PC-9 (cell line): ENCODE measurements at regions of chr17 and their contacts with region 1.

Region 1: DNA sequence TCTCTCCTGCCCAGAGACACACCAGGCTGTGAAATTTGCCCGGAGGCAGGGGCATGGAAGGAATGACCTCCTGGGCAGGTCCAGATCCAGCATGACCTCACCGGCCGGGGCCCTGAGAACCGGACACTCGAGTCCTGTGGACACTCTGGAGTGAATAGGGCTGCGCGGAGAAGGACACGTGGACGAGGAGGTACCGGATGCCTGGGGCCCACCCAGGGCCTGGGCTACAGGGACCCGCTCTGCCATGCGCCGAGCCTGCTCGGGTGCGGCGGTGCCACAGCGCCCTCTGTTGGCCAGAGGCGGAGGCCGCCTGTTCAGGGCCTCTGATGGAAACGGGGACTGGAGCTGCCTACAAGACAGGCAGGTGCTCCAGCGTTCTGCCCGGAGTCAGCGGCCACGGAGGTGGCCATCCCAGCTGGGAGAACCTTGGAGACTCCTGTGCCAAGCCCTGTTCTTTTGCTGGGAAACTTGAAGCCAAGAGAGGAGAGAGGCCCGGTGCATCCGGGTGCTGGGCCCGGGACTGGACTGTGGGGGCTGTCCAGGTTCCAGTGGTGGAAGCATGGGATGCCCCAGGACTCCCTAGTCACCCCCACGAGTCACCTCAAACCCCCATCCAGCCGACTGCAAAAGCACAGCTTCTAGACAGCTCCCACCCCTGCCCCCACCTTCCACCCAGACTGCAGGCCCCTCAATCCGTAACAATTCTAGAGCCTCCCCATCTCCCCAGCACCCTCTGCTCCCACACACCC is 19.3 kb upstream of the NXPH3 start:
- DNase-seq: peak in 1 of 2 experiments; percentile 83
- H3K4me3 ChIP-seq: peak overlapping the region; percentile 27; the same call in 1 of the 2 replicates
- H3K27ac ChIP-seq: no peak overlapping the region
- H3K4me1 ChIP-seq: no peaks in the 10 kb centered on the region
- H3K27me3 ChIP-seq: no peaks in the 10 kb centered on the region
- CTCF ChIP-seq: peak; percentile 98

Region 2: GRCh38 chr17:48690655-48691054 is 865.7 kb before region 1 on chr17:
- CTCF ChIA-PET with region 1: interaction called, 14 read pairs
- POLR2A ChIA-PET with region 1: no interaction called
- intact Hi-C with region 1: no loop called
- DNase-seq: no peak
- H3K4me3 ChIP-seq: no peak overlapping the region
- H3K27ac ChIP-seq: no peak overlapping the region
- H3K4me1 ChIP-seq: no peaks in the 10 kb centered on the region
- H3K27me3 ChIP-seq: peaks cover 13% of the 10 kb centered on the region; the same call in 1 of the 2 replicates
- CTCF ChIP-seq: no peak

Region 3: GRCh38 chr17:49315551-49316257 is 240.7 kb before region 1 on chr17:
- CTCF ChIA-PET with region 1: interaction called, 5 read pairs
- POLR2A ChIA-PET with region 1: no interaction called
- intact Hi-C with region 1: loop called (anchors 1 kb)
- DNase-seq: peak; percentile 72 to 88
- H3K4me3 ChIP-seq: no peak overlapping the region
- H3K27ac ChIP-seq: peak overlapping the region; percentile 14; the same call in 1 of the 2 replicates
- H3K4me1 ChIP-seq: peaks cover 8% of the 10 kb centered on the region
- H3K27me3 ChIP-seq: no peaks in the 10 kb centered on the region
- CTCF ChIP-seq: peak; percentile 94

Region 4: GRCh38 chr17:49407981-49408501 is 148.4 kb before region 1 on chr17:
- CTCF ChIA-PET with region 1: interaction called, 12 read pairs
- POLR2A ChIA-PET with region 1: interaction called, 5 read pairs
- intact Hi-C with region 1: loop called (anchors 1 kb)
- DNase-seq: peak; percentile 58 to 69
- H3K4me3 ChIP-seq: no peak overlapping the region
- H3K27ac ChIP-seq: no peak overlapping the region
- H3K4me1 ChIP-seq: 0 out of 2 replicates have a peak, but pooled peaks cover under 1% of the 10 kb centered on the region
- H3K27me3 ChIP-seq: no peaks in the 10 kb centered on the region
- CTCF ChIP-seq: peak; percentile 94

Region 5: GRCh38 chr17:49414622-49415350 is 141.6 kb before region 1 on chr17 and contains the start of gene PHB1:
- CTCF ChIA-PET with region 1: interaction called, 12 read pairs
- POLR2A ChIA-PET with region 1: no interaction called
- intact Hi-C with region 1: no loop called
- DNase-seq: peak; percentile 94 to 98
- H3K4me3 ChIP-seq: peak within 1 kb of the TSS; percentile 72
- H3K27ac ChIP-seq: no peak within 1 kb of the TSS
- H3K4me1 ChIP-seq: peaks cover 14% of the 10 kb centered on the region
- H3K27me3 ChIP-seq: no peaks in the 10 kb centered on the region
- CTCF ChIP-seq: no peak
- total RNA-seq, gene PHB1: 197 and 244 TPM in 2 replicates

Region 6: DNA sequence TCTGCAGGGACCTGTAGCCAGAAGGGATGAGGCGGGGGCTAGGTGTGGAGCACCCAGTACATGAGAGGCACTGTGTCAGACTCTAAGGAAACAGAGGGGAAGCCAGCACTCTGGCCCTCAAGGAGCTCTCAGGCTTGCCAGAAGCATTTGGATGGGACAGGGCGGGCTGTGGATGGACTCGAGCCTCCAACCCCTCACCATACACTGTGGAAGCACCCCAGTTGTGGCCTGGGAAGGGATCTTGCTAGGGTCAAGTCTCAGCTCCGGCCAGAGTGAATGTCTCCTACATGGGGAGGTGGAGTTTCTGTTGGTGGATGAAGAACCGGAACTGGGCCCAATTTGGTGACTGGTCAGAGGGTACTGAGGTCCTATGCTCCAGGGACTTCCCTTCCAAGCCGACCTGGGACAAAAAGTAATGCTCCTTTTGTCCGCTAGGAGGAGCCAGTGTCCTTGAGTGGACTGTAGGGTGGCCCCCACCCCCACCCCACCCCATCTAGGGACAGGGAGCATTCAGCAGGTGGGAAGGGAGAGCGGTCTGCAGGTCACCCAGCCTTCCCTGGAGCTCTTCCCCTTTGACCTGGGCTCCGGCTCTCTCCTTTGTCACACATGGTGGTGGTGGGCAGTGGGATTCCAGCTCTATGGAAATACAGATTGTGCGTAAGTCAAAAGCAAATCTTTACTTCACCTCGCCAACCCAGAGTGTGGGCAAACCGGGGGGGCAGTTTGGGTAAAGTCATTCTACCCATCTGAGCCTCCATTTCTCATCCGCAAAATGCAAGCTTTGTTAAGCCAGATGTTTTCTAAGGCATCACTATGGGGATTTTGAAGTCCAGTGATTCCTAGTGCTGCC is 121.4 kb before region 1 on chr17:
- CTCF ChIA-PET with region 1: interaction called, 7 read pairs
- POLR2A ChIA-PET with region 1: no interaction called
- intact Hi-C with region 1: loop called (anchors 1 kb)
- DNase-seq: peak; percentile 46 to 62
- H3K4me3 ChIP-seq: no peak overlapping the region
- H3K27ac ChIP-seq: no peak overlapping the region
- H3K4me1 ChIP-seq: no peaks in the 10 kb centered on the region
- H3K27me3 ChIP-seq: peaks cover 74% of the 10 kb centered on the region
- CTCF ChIP-seq: peak; percentile 94

Region 7: DNA sequence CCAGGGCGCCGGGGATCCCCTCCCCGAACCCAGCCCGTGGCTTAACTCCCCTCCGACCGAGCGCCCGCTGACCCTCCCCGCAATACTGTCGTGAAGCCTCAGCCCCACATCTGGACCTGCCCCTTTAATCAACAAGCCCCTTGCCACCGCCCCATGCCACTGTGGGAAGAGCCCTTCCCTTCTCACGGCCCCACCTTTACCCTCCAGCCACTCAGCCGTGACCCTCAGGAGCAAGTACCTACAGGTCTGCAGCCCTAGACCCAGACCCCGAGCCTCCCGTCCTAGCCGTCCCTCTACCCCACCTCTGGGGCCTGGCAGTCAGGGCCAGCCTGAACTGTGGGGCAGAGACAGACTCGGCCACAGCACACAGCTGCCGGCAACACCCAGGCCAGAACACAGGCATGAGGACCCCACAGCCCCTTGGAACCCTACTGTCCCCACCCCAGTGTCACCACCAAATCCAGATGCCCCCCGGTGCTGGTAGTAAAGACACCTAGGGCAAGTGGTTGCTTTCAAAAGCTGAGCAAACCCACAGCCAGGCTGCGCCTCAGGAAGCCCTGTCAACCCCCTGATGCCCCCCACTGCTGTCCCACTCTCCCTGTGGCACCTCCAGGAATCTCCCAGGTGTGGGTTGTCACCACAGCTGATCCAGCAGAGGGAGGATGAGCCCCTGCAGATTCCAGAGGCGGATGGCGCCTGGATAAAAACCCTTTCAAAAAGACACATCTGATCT is 20.7 kb after region 1 on chr17:
- CTCF ChIA-PET with region 1: no interaction called
- POLR2A ChIA-PET with region 1: no interaction called
- intact Hi-C with region 1: no loop called
- DNase-seq: no peak
- H3K4me3 ChIP-seq: peak overlapping the region; percentile 51
- H3K27ac ChIP-seq: no peak overlapping the region
- H3K4me1 ChIP-seq: peaks cover 7% of the 10 kb centered on the region; the same call in 1 of the 2 replicates
- H3K27me3 ChIP-seq: peaks cover 67% of the 10 kb centered on the region
- CTCF ChIP-seq: no peak